ENCODE measurements at regions of chr14 and their contacts with region 1.

Region 1: DNA sequence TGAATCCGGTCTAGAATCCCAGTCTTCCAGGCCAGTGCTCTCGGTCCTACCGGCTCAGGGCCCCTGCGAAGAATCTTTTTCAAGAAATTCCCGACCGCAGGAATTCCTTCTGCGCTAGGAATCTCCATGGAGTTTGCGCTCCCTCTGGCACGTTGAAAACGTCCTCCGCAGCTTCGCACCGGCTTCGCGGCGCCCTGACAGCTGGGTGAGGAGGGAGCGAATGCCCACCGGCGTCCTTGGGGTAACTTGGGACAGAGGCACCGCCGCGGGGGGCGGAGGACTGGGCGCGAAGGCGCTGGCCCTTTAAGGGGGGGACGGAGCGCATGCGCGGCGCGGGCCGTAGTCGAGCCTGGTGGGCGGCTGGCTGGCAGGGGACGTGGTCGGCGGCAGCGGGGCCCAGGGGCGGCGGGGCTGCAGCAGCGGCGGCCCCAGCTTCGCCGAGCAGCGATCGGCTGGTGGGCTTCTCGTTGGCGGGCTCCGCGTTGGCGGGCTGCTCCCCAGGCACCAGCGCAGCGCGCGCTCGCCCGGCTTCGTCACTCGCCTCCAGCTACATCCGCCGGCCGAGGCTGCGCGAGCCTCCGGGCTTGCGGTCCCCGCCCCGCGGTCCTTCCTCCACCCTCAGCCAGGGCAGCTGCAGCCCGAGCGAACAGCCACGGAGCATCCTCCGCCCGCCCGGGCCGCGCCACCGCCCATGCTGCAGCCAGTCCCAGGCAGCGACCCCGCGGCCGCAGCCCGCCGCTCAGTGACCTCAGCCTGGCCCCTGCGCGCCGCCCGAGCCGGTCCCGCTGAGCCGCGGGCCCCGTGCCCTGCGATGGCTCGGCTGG is at the start of gene VASH1:
- DNase-seq: peak; percentile 51 to 69 (median 68)
- ATAC-seq: peak; percentile 87
- H3K4me3 ChIP-seq: peak within 1 kb of the TSS; percentile 30
- H3K4me1 ChIP-seq: peaks cover 17% of the 10 kb centered on the region
- CTCF ChIP-seq: no peak
- total RNA-seq, gene VASH1: 4.8 to 11.6 (median 5.4) TPM

Region 2: DNA sequence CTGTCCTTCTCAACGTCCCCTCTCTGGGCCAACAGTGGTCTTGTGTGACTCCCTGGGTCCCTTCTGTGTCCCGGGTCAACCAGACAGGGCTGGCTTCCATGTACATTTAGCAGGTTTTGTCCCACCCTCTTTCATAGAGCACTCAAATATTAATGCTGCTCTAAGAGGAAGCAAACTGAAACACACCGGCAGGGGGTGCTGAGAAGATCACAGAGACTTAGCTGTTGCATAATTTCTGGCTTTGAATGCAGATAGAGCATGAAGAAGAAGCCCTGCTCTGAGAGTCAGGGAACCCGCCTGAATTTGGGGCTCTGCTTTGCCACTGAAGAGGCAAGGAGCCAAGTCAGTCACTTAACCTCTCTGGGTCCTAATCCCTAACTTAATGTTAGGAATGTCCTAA is 246.7 kb before region 1 on chr14:
- intact Hi-C with region 1: no loop called
- DNase-seq: peak in 1 of 3 donors; percentile 18
- ATAC-seq: no peak
- H3K4me3 ChIP-seq: no peak overlapping the region
- H3K4me1 ChIP-seq: no peaks in the 10 kb centered on the region
- CTCF ChIP-seq: no peak

Region 3: GRCh38 chr14:76564471-76565422 is 196.6 kb before region 1 on chr14:
- intact Hi-C with region 1: no loop called
- DNase-seq: no peak
- ATAC-seq: no peak
- H3K4me3 ChIP-seq: no peak overlapping the region
- H3K4me1 ChIP-seq: no peaks in the 10 kb centered on the region
- CTCF ChIP-seq: no peak

Region 4: GRCh38 chr14:76710056-76711010 is 51.0 kb before region 1 on chr14:
- intact Hi-C with region 1: loop called in 1 of 2 experiments (anchors 10 kb)
- DNase-seq: peak in 1 of 3 donors; percentile 53
- ATAC-seq: peak; percentile 55
- H3K4me3 ChIP-seq: no peak overlapping the region
- H3K4me1 ChIP-seq: no peaks in the 10 kb centered on the region
- CTCF ChIP-seq: peak; percentile 64

Measured in mucosa of descending colon (tissue), 3 donors.